Activated naive CD4-positive, alpha-beta T cell treated with anti-CD3 and anti-CD28 coated beads for 36 hours (primary cell): ENCODE measurements at regions of chr11 and their contacts with region 1.

Region 1: DNA sequence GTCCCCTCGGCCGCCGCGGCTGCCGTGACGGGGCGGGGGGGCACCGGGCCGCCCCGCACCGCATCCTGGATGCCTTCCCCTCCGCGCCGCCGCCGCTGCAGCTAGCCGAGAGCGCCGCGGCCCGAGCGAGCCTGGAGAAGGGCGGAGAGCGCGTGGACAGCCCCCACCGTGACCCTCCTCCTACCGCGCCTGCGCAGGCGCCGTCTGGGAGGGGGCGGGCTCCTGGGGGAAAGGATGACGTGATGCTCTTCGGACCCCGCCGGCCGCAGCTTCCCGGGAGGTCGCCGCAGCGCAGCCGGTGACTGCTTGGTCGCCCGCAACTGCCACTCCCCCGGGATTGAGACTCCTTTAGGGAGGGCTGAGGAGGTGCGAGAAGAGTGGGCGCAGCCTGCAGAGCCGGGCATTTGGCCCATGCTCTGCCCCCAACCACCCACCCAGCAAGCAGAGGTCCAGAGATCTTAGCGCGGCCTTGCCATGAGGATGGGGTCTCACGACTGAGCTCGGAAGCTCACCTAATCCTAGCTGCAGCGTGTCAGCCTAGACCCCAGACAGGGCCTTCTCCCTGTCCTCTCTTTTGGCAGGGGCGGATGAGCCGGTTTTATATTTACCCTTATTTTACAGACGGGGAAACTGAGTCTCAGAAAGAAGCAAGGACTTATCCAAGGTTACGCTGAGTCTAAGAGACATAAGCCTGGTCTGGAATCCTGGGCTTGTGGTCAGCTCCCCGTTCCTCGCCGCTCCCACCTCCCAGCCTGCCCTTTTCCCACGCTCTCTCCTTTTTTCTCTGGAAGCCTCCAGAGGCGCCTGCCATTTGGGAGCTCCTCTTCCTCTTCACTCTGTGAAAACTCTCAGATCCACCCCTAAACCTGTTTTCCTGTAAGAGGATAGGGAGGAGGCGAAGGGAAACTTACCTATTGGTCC is at the start of gene DENND5A:
- DNase-seq: peak; percentile 62
- H3K4me3 Mint-ChIP-seq: peak within 1 kb of the TSS; percentile 84
- H3K27ac Mint-ChIP-seq: peak within 1 kb of the TSS; percentile 95
- H3K4me1 Mint-ChIP-seq: peaks cover 30% of the 10 kb centered on the region
- H3K27me3 Mint-ChIP-seq: peaks cover 3% of the 10 kb centered on the region
- total RNA-seq, gene DENND5A: 62.3 to 63.5 TPM

Region 2: DNA sequence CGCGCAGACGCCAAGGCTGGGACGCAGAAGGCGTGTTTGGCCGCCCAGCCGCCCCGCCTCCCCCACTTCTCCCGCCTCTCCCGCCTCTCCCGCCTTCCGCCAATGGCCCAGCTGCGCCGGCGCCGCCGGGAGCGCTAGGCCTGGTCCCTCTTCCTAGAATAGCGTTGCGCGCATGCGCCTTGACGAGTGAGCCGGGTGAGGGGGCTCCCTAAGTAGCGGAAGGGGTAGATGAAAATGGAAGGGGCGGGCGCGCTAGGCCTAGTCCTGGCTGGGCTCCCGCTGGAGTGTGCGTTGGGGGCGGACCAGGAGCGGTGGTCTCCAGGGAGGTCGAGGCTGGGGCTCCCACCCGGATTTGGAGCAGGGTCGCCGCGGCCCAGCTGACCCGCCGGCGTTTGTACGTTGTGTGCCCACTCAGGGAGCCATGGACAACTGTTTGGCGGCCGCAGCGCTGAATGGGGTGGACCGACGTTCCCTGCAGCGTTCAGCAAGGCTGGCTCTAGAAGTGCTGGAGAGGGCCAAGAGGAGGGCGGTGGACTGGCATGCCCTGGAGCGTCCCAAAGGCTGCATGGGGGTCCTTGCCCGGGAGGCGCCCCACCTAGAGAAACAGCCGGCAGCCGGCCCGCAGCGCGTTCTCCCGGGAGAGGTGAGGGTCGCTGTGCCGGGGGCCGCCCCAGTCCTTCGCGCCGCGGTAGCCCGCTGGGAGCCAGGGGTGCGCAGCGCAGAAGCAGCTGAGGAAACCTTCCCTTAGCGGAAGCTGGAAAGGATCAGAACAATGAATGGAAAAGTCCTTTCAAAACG is 354.2 kb before region 1 on chr11 and contains the start of gene AKIP1:
- CTCF ChIA-PET with region 1: no interaction called
- intact Hi-C with region 1: loop called (anchors 5 kb)
- DNase-seq: peak; percentile 91
- H3K4me3 Mint-ChIP-seq: peak within 1 kb of the TSS; percentile 92
- H3K27ac Mint-ChIP-seq: peak within 1 kb of the TSS; percentile 86
- H3K4me1 Mint-ChIP-seq: peaks cover 44% of the 10 kb centered on the region
- H3K27me3 Mint-ChIP-seq: no peaks in the 10 kb centered on the region
- total RNA-seq, gene AKIP1: 41.5 to 43.9 TPM

Region 3: DNA sequence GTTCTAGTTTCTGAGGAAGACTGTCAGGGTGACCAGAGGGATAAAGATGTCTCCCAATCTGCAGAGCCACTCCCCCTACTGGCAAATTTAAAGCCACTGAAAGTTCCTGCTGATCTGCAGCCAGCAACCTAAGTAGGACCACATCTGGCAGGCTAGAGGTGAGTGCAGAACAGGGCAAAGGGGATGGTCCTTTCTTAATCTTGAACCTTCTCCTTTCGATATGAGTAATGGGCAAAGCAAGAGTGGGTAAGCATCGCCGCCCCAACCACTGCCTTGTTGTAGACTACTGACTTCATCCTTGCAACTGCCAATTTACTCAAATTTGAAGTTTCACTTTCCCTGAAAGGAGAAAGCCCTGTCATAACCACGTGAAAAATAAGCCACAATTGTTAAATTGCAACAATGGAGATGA is 204.8 kb before region 1 on chr11:
- CTCF ChIA-PET with region 1: no interaction called
- intact Hi-C with region 1: loop called (anchors 1 kb)
- DNase-seq: peak; percentile 89
- H3K4me3 Mint-ChIP-seq: no peak overlapping the region
- H3K27ac Mint-ChIP-seq: no peak overlapping the region
- H3K4me1 Mint-ChIP-seq: peaks cover 12% of the 10 kb centered on the region
- H3K27me3 Mint-ChIP-seq: peaks cover 13% of the 10 kb centered on the region

Region 4: GRCh38 chr11:9210922-9211320 is 54.5 kb before region 1 on chr11:
- CTCF ChIA-PET with region 1: interaction called, 3 read pairs
- intact Hi-C with region 1: loop called (anchors 1 kb)
- DNase-seq: peak; percentile 73
- H3K4me3 Mint-ChIP-seq: no peak overlapping the region
- H3K27ac Mint-ChIP-seq: peak overlapping the region; percentile 82
- H3K4me1 Mint-ChIP-seq: peaks cover 68% of the 10 kb centered on the region
- H3K27me3 Mint-ChIP-seq: no peaks in the 10 kb centered on the region

Region 5: DNA sequence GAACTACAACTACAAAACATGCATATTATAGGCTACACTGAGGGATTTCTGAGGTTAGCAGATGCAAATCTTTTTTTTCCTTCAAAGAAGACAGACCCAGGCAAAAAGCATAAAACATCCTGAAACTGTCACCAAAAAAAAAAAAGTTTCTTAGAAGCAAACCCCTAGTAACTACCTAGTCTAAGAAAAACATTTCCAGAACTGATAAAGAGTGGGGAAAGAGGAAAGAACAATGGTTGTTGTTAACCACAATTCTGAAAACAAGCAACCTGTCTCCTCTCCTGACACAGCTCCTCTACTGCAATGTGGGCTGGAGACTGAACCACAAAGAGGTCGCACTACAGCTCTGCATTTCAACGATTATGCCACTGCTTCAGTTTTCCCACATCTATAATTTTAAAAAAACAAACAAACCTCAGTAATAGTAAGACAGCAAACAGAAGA is 15.3 kb before region 1 on chr11:
- CTCF ChIA-PET with region 1: interaction called, 3 read pairs
- intact Hi-C with region 1: loop called (anchors 1 kb)
- DNase-seq: peak; percentile 52
- H3K4me3 Mint-ChIP-seq: no peak overlapping the region
- H3K27ac Mint-ChIP-seq: peak overlapping the region; percentile 56
- H3K4me1 Mint-ChIP-seq: peaks cover 70% of the 10 kb centered on the region
- H3K27me3 Mint-ChIP-seq: no peaks in the 10 kb centered on the region

Region 6: GRCh38 chr11:9363954-9364912 is 98.8 kb after region 1 on chr11:
- CTCF ChIA-PET with region 1: no interaction called
- intact Hi-C with region 1: loop called (anchors 1 kb)
- DNase-seq: peak; percentile 91
- H3K4me3 Mint-ChIP-seq: peak overlapping the region; percentile 66
- H3K27ac Mint-ChIP-seq: peak overlapping the region; percentile 73
- H3K4me1 Mint-ChIP-seq: peaks cover 35% of the 10 kb centered on the region
- H3K27me3 Mint-ChIP-seq: no peaks in the 10 kb centered on the region

Region 7: GRCh38 chr11:9565822-9566560 is 300.5 kb after region 1 on chr11:
- CTCF ChIA-PET with region 1: interaction called, 3 read pairs
- intact Hi-C with region 1: loop called (anchors 1 kb)
- DNase-seq: peak; percentile 81
- H3K4me3 Mint-ChIP-seq: no peak overlapping the region
- H3K27ac Mint-ChIP-seq: peak overlapping the region; percentile 65
- H3K4me1 Mint-ChIP-seq: peaks cover 9% of the 10 kb centered on the region
- H3K27me3 Mint-ChIP-seq: no peaks in the 10 kb centered on the region

Region 8: DNA sequence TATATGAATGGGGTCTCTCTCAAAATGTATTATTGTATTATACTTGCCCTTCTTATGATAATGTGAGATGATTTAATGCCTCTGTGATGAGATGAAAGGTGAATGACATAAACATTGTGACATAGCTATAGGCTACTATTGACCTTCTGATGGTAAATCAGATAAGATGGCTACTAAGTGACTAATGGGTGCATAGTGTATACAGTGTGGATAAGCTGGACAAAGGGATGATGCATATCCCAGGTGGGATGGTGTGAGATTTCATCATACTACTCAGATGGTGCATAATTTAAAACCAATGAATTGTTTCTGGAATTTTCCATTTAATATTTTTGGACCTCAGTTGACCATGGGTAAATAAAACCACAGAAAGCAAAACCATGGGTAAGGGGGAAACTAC is 785.1 kb after region 1 on chr11:
- CTCF ChIA-PET with region 1: no interaction called
- intact Hi-C with region 1: no loop called
- DNase-seq: no peak
- H3K4me3 Mint-ChIP-seq: no peak overlapping the region
- H3K27ac Mint-ChIP-seq: no peak overlapping the region
- H3K4me1 Mint-ChIP-seq: no peaks in the 10 kb centered on the region
- H3K27me3 Mint-ChIP-seq: no peaks in the 10 kb centered on the region